Ovary (tissue), 10 donors: ENCODE measurements at regions of chr20 and their contacts with region 1.

Region 1: GRCh38 chr20:36199345-36200257 is 36.7 kb upstream of the AAR2 start:
- DNase-seq: peak; percentile 69 to 85 (median 81)
- H3K4me3 ChIP-seq: no peak overlapping the region
- H3K27ac ChIP-seq: no peak overlapping the region
- H3K4me1 ChIP-seq: no peaks in the 10 kb centered on the region
- H3K27me3 ChIP-seq: no peaks in the 10 kb centered on the region
- CTCF ChIP-seq: peak; percentile 71 to 79 (median 74)
- EP300 ChIP-seq: no peak
- POLR2A ChIP-seq: no peak

Region 2: DNA sequence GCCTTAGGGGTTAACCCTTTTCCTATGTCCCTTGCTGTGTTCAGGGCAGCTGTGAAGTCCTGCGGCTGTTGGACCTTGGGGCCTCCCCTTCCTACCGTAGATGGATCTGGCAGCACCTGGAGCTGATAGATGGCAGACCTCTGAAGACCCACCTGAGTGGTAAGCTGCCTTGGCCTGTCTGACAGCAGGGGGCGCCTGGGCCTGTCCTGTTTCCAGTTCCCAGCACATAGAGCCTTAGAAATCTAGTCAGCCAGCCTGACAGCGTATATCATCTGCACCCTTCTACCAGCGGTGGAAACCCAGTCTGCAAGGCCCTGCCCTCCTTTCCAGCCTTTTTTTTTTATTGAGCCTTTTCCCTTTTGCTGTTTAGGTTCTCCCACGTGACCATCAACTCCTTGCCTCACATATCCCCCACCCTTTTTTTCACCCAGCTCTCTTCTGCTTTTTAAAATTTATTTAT is 204.6 kb before region 1 on chr20:
- intact Hi-C with region 1: loop called (anchors 2 to 10 kb)
- DNase-seq: peak; percentile 74 to 86 (median 81)
- H3K4me3 ChIP-seq: no peak overlapping the region
- H3K27ac ChIP-seq: no peak overlapping the region
- H3K4me1 ChIP-seq: no peaks in the 10 kb centered on the region
- H3K27me3 ChIP-seq: no peaks in the 10 kb centered on the region
- CTCF ChIP-seq: peak; percentile 58 to 74 (median 64)
- EP300 ChIP-seq: no peak
- POLR2A ChIP-seq: no peak

Region 3: DNA sequence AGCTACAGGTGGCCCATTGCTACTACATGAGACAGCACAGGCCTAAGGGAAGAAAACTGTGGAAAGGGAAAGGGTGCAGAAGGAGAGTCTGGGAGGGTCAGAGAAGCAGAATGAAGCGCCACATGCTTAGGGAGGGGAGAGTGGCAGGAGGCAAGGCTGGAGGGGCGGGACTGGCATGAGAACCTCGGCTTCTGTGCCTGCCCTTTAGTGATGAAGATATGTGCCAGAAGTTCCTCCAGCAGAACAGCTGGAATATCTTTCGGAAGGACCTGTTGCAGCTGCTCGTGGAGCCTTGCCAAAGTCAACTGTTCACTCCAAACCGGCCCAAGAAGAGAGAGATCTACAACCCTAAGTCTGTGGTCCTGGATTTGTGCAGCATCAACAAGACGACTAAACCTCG is 169.5 kb before region 1 on chr20:
- intact Hi-C with region 1: no loop called
- DNase-seq: peak; percentile 52 to 72 (median 62)
- H3K4me3 ChIP-seq: no peak overlapping the region
- H3K27ac ChIP-seq: no peak overlapping the region
- H3K4me1 ChIP-seq: peaks cover 9% of the 10 kb centered on the region
- H3K27me3 ChIP-seq: no peaks in the 10 kb centered on the region
- CTCF ChIP-seq: no peak
- EP300 ChIP-seq: no peak
- POLR2A ChIP-seq: no peak

Region 4: DNA sequence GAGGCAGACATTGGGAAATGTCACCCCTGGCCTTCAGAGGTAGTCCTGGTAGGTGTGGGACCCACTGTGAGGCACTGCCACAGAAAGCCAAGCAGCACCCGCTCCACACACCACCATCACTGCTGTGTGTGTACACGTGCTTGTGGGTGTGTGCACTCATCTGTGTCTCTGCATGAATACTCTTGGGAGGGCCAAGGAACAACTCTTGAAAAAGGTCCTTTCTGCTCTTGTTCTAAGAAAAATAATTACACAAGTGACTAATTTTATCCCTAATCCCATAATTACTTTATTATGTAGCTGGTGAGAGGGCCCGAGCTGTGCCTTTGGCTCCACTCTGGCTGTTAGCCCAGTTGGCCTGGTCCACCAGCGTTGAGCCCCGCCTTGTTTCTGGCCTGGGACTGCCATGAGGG is 66.8 kb before region 1 on chr20:
- intact Hi-C with region 1: loop called in 1 of 4 experiments (anchors 2 kb)
- DNase-seq: no peak
- H3K4me3 ChIP-seq: no peak overlapping the region
- H3K27ac ChIP-seq: no peak overlapping the region
- H3K4me1 ChIP-seq: no peaks in the 10 kb centered on the region
- H3K27me3 ChIP-seq: no peaks in the 10 kb centered on the region
- CTCF ChIP-seq: no peak
- EP300 ChIP-seq: no peak
- POLR2A ChIP-seq: no peak

Region 5: DNA sequence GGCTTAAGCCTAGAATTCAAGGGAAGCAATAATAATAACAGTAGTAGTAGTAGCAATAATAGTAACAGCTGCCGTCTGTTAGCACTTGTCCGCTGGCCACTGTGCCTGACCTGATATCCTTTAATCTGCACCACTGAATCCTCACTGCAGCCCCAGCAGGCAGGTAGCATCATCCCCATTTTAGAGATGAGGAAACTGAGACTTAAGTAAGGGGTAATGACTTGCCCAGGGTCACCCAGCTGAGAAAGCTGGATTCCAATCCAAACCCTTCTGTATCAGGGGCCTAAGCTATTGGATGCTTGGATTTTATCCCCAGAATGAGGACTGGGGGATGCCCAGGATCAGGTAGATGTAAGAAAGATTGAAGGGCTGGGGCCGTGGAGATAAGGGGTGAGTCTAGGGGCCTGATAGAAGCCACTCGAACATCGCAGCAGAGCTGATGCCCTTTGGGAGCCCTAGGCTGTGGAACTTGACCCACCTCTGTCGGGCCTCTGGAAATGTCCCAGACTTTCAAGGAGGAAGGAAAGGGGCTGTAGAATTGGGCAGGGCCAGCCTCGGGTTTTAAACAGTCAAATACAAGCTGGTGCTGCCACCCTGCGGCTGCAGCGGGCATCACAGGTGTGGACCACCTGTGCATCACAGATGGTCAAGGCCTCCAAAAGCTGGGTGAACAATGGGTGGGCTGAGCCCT is 239.6 kb after region 1 on chr20:
- intact Hi-C with region 1: loop called in 2 of 4 experiments (anchors 5 to 10 kb)
- DNase-seq: peak; percentile 48 to 79 (median 62)
- H3K4me3 ChIP-seq: no peak overlapping the region
- H3K27ac ChIP-seq: no peak overlapping the region
- H3K4me1 ChIP-seq: no peaks in the 10 kb centered on the region
- H3K27me3 ChIP-seq: no peaks in the 10 kb centered on the region
- CTCF ChIP-seq: peak; percentile 40 to 65 (median 43)
- EP300 ChIP-seq: no peak
- POLR2A ChIP-seq: no peak

Region 6: DNA sequence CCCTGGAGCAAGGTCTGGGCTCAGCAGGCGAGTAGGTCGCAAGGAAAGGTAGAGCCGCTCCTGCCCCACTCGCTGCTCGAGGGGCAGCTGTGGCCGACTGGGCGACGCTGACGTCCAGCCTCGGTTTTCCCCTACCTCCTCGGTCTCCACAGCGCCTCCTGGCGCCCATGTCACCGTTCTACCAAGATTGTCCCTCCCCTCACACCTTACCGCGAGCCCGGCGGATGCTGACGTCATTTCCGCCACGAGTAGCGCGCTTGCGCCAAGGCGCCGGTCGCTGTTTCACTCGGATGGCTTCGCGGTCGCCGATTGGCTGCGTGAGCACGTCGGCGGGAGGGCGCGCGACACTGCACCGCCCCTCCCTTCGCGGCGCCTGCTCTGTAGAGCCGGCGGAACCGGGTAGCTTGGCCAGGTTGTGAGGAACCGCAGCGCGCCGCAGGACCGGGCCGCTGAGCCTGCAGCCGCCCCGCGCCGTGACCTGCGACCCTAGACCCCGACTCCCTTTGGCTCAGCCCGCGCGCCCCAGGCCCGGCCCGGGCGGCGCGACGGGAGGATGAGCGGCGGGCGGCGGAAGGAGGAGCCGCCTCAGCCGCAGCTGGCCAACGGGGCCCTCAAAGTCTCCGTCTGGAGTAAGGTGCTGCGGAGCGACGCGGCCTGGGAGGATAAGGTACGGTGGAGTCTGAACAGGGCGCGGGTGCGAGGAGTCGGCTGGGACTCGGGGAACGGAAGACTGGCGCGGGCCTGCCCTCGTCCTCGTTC is 406.0 kb after region 1 on chr20 and contains the start of gene RAB5IF:
- intact Hi-C with region 1: loop called in 1 of 4 experiments (anchors 10 kb)
- DNase-seq: peak; percentile 99 to 100 (median 100)
- H3K4me3 ChIP-seq: peak within 1 kb of the TSS; percentile 88
- H3K27ac ChIP-seq: peak within 1 kb of the TSS; percentile 52 to 64
- H3K4me1 ChIP-seq: peaks cover 8% of the 10 kb centered on the region
- H3K27me3 ChIP-seq: no peaks in the 10 kb centered on the region
- CTCF ChIP-seq: peak; percentile 94 to 99 (median 94)
- EP300 ChIP-seq: no peak
- POLR2A ChIP-seq: peak; percentile 23
- total RNA-seq, gene RAB5IF: 35.6 to 61.0 (median 40.9) TPM

Region 7: DNA sequence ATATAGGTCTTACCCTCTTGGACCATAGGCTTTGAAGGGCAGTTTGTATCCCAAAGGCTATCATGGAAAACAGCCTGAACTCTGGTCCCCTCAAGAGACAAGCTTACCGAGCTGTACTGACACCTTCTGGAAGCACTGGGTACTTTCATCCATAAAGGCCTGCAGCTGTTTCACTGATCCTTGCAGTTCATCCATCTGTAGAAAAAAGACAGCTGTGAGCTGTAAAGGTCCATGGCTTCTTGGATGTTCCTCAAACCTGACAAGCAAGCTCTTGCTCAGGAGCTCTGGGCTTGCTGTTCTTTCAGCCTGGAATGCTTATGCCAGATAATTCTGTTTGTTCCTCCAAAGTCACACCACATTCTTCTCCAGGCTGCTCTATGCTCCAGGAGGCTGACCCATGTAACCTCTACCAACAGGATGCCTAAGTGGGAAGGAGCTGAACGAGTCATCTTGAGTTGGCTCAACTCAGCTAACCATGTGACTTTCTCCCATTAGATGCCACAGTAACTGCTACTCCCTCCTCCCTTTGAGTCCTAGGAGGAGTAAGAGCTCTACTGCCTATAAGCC is 555.1 kb after region 1 on chr20:
- intact Hi-C with region 1: loop called in 1 of 4 experiments (anchors 10 kb)
- DNase-seq: peak in 2 of 5 donors; percentile 44 to 64
- H3K4me3 ChIP-seq: no peak overlapping the region
- H3K27ac ChIP-seq: no peak overlapping the region
- H3K4me1 ChIP-seq: no peaks in the 10 kb centered on the region
- H3K27me3 ChIP-seq: no peaks in the 10 kb centered on the region
- CTCF ChIP-seq: peak; percentile 58 to 66 (median 64)
- EP300 ChIP-seq: no peak
- POLR2A ChIP-seq: no peak

Region 8: GRCh38 chr20:36861875-36862801 is 662.5 kb after region 1 on chr20:
- intact Hi-C with region 1: loop called in 1 of 4 experiments (anchors 10 kb)
- DNase-seq: peak; percentile 86 to 91 (median 87)
- H3K4me3 ChIP-seq: peak overlapping the region; percentile 46
- H3K27ac ChIP-seq: peak overlapping the region; percentile 89 to 95
- H3K4me1 ChIP-seq: peaks cover 20% of the 10 kb centered on the region
- H3K27me3 ChIP-seq: no peaks in the 10 kb centered on the region
- CTCF ChIP-seq: no peak
- EP300 ChIP-seq: no peak
- POLR2A ChIP-seq: peak; percentile 80